CD8-positive, alpha-beta T cell (primary cell): ENCODE measurements at regions of chr1 and their contacts with region 1.

Region 1: GRCh38 chr1:10494754-10495474 is 20.2 kb downstream of the PEX14 start:
- DNase-seq: peak; percentile 66 to 88 (median 81)
- ATAC-seq: peak; percentile 76
- H3K4me3 ChIP-seq: peak overlapping the region; percentile 50 to 59
- H3K4me3 Mint-ChIP-seq: peak overlapping the region; percentile 83
- H3K27ac ChIP-seq: peak overlapping the region; percentile 72 to 80
- H3K27ac Mint-ChIP-seq: peak overlapping the region; percentile 98
- H3K4me1 ChIP-seq: peaks cover 21% of the 10 kb centered on the region
- H3K4me1 Mint-ChIP-seq: peaks cover 42% of the 10 kb centered on the region
- H3K27me3 ChIP-seq: no peaks in the 10 kb centered on the region
- H3K27me3 Mint-ChIP-seq: no peaks in the 10 kb centered on the region
- CTCF ChIP-seq: peak; percentile 99

Region 2: DNA sequence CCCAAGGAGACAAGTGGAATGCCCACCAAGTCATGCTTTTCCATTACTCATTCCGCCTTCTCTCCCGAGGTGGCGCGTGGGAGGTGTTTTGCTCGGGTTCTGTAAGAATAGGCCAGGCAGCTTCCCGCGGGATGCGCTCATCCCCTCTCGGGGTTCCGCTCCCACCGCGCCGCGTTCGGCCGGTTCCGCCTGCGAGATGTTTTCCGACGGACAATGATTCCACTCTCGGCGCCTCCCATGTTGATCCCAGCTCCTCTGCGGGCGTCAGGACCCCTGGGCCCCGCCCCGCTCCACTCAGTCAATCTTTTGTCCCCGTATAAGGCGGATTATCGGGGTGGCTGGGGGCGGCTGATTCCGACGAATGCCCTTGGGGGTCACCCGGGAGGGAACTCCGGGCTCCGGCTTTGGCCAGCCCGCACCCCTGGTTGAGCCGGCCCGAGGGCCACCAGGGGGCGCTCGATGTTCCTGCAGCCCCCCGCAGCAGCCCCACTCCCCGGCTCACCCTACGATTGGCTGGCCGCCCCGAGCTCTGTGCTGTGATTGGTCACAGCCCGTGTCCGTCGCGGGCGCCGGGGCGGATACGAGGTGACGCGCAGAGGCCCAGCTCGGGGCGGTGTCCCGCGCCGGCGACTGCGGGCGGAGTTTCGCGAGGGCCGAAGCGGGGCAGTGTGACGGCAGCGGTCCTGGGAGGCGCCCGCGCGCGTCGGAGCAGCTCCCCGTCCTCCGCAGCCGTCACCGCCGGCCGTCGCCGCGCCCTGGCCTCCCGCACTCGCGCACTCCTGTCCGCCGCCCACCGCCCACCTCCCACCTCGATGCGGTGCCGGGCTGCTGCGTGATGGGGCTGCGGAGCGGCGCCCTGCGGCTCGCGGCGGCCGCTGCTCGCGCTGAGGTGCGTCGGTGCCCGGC is 284.8 kb before region 1 on chr1 and contains the start of gene KIF1B:
- CTCF ChIA-PET with region 1: interaction called, 5 read pairs
- POLR2A ChIA-PET with region 1: no interaction called
- intact Hi-C with region 1: loop called in 1 of 2 experiments (anchors 10 kb)
- DNase-seq: peak; percentile 92 to 98 (median 97)
- ATAC-seq: peak; percentile 98
- H3K4me3 ChIP-seq: peak within 1 kb of the TSS; percentile 67 to 82
- H3K4me3 Mint-ChIP-seq: peak within 1 kb of the TSS; percentile 91
- H3K27ac ChIP-seq: peak within 1 kb of the TSS; percentile 54 to 60
- H3K27ac Mint-ChIP-seq: peak within 1 kb of the TSS; percentile 55
- H3K4me1 ChIP-seq: peaks cover 5% of the 10 kb centered on the region
- H3K4me1 Mint-ChIP-seq: peaks cover 25% of the 10 kb centered on the region
- H3K27me3 ChIP-seq: peaks cover 0 to 2% of the 10 kb centered on the region in 2 experiments
- H3K27me3 Mint-ChIP-seq: peaks cover 2% of the 10 kb centered on the region
- CTCF ChIP-seq: peak; percentile 99
- total RNA-seq, gene KIF1B: 6.1 to 7.2 TPM

Region 3: DNA sequence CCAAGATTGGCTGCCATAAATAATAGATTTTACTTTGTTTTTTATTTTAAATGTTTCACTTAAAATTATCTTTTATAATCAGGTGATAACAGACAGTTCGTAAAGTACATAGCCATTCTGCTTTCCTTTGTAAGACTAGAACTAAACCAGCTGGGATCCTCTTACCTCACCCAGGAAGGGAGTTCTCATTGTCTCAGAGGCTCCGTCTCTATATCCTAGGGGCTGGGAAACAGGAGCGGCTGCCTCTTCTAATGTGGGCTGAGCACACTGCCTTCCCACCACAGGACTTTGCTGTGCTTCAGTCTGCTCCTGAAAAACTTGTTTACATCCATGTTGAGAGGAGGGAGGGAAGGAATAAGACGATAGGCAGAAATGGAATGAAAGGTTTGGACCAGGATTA is 141.6 kb before region 1 on chr1:
- CTCF ChIA-PET with region 1: no interaction called
- POLR2A ChIA-PET with region 1: no interaction called
- intact Hi-C with region 1: no loop called
- DNase-seq: no peak
- ATAC-seq: no peak
- H3K4me3 ChIP-seq: no peak overlapping the region
- H3K4me3 Mint-ChIP-seq: no peak overlapping the region
- H3K27ac ChIP-seq: no peak overlapping the region
- H3K27ac Mint-ChIP-seq: no peak overlapping the region
- H3K4me1 ChIP-seq: no peaks in the 10 kb centered on the region
- H3K4me1 Mint-ChIP-seq: no peaks in the 10 kb centered on the region
- H3K27me3 ChIP-seq: no peaks in the 10 kb centered on the region
- H3K27me3 Mint-ChIP-seq: no peaks in the 10 kb centered on the region
- CTCF ChIP-seq: no peak

Region 4: GRCh38 chr1:10472220-10473144 is 22.4 kb before region 1 on chr1 and contains the start of gene DFFA:
- CTCF ChIA-PET with region 1: interaction called, 18 read pairs
- POLR2A ChIA-PET with region 1: interaction called, 5 read pairs
- intact Hi-C with region 1: loop called in 1 of 2 experiments (anchors 2 kb)
- DNase-seq: peak; percentile 83 to 96 (median 91)
- ATAC-seq: peak; percentile 75
- H3K4me3 ChIP-seq: peak within 1 kb of the TSS; percentile 62 to 81
- H3K4me3 Mint-ChIP-seq: peak within 1 kb of the TSS; percentile 92
- H3K27ac ChIP-seq: peak within 1 kb of the TSS; percentile 39 to 66
- H3K27ac Mint-ChIP-seq: peak within 1 kb of the TSS; percentile 90
- H3K4me1 ChIP-seq: peaks cover 34% of the 10 kb centered on the region
- H3K4me1 Mint-ChIP-seq: peaks cover 47% of the 10 kb centered on the region
- H3K27me3 ChIP-seq: no peaks in the 10 kb centered on the region
- H3K27me3 Mint-ChIP-seq: no peaks in the 10 kb centered on the region
- CTCF ChIP-seq: no peak
- total RNA-seq, gene DFFA: 10.0 to 10.4 TPM

Region 5: DNA sequence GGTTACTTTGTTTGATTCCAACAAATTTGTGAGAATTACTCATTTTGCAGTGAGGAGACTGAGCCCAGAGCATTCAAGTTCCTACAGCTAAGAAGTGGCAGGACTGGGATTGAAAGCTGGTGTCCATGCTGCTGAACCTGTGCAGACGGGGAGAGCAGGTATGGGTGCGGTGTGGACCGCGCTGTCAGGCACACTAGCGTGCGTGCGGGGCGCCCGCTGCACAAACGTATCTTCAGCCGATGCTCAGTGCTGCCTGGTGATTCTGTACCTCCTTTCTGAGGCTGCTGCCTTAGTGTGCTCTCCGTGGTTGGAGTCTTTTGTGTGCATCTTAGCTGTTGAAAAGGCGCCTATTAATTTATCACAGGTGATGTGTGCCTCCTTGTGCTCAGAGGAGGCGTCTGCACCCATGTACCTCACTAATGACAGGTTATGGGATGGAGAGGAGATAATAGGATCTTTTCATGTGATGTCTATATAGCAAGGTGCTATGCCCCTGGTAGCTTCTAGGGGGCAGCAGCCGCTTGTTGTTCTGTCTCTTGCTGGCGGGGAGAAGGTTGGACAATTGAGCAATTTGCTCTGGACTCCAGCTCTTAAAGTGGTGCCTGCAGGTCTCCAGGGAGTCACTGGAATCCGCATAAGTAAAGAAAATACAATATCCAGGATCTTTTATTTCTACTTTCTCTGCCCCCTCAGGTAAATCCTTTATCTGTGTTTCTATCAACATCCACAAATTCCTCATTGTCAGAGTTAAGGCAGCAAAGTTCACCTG is 12.4 kb after region 1 on chr1:
- CTCF ChIA-PET with region 1: interaction called, 135 read pairs
- POLR2A ChIA-PET with region 1: interaction called, 7 read pairs
- intact Hi-C with region 1: loop called (anchors 1 to 2 kb)
- DNase-seq: peak; percentile 22 to 76 (median 57)
- ATAC-seq: peak; percentile 59
- H3K4me3 ChIP-seq: no peak overlapping the region
- H3K4me3 Mint-ChIP-seq: no peak overlapping the region
- H3K27ac ChIP-seq: no peak overlapping the region
- H3K27ac Mint-ChIP-seq: peak overlapping the region; percentile 39
- H3K4me1 ChIP-seq: peaks cover 35% of the 10 kb centered on the region
- H3K4me1 Mint-ChIP-seq: peaks cover 44% of the 10 kb centered on the region
- H3K27me3 ChIP-seq: no peaks in the 10 kb centered on the region
- H3K27me3 Mint-ChIP-seq: no peaks in the 10 kb centered on the region
- CTCF ChIP-seq: peak; percentile 81

Region 6: GRCh38 chr1:10635085-10635896 is 140.4 kb after region 1 on chr1:
- CTCF ChIA-PET with region 1: interaction called, 3 read pairs
- POLR2A ChIA-PET with region 1: no interaction called
- intact Hi-C with region 1: loop called in 1 of 2 experiments (anchors 5 kb)
- DNase-seq: no peak
- ATAC-seq: no peak
- H3K4me3 ChIP-seq: no peak overlapping the region
- H3K4me3 Mint-ChIP-seq: no peak overlapping the region
- H3K27ac ChIP-seq: no peak overlapping the region
- H3K27ac Mint-ChIP-seq: no peak overlapping the region
- H3K4me1 ChIP-seq: peaks cover 6% of the 10 kb centered on the region
- H3K4me1 Mint-ChIP-seq: peaks cover 4% of the 10 kb centered on the region
- H3K27me3 ChIP-seq: no peaks in the 10 kb centered on the region
- H3K27me3 Mint-ChIP-seq: no peaks in the 10 kb centered on the region
- CTCF ChIP-seq: no peak

Region 7: GRCh38 chr1:10841118-10841517 is 346.2 kb after region 1 on chr1:
- CTCF ChIA-PET with region 1: no interaction called
- POLR2A ChIA-PET with region 1: no interaction called
- intact Hi-C with region 1: no loop called
- DNase-seq: no peak
- ATAC-seq: no peak
- H3K4me3 ChIP-seq: no peak overlapping the region
- H3K4me3 Mint-ChIP-seq: no peak overlapping the region
- H3K27ac ChIP-seq: no peak overlapping the region
- H3K27ac Mint-ChIP-seq: no peak overlapping the region
- H3K4me1 ChIP-seq: no peaks in the 10 kb centered on the region
- H3K4me1 Mint-ChIP-seq: peaks cover 2% of the 10 kb centered on the region
- H3K27me3 ChIP-seq: peaks cover 0 to 3% of the 10 kb centered on the region in 2 experiments
- H3K27me3 Mint-ChIP-seq: peaks cover 21% of the 10 kb centered on the region
- CTCF ChIP-seq: no peak

Region 8: GRCh38 chr1:10904396-10905358 is 409.8 kb after region 1 on chr1:
- CTCF ChIA-PET with region 1: interaction called, 16 read pairs
- POLR2A ChIA-PET with region 1: no interaction called
- intact Hi-C with region 1: no loop called
- DNase-seq: peak in 8 of 9 experiments; percentile 33 to 80 (median 49)
- ATAC-seq: peak; percentile 78
- H3K4me3 ChIP-seq: peak overlapping the region in 1 of 2 experiments; percentile 13
- H3K4me3 Mint-ChIP-seq: peak overlapping the region; percentile 65
- H3K27ac ChIP-seq: peak overlapping the region in 1 of 2 experiments; percentile 53
- H3K27ac Mint-ChIP-seq: peak overlapping the region; percentile 88
- H3K4me1 ChIP-seq: peaks cover 46% of the 10 kb centered on the region
- H3K4me1 Mint-ChIP-seq: peaks cover 32% of the 10 kb centered on the region
- H3K27me3 ChIP-seq: no peaks in the 10 kb centered on the region
- H3K27me3 Mint-ChIP-seq: no peaks in the 10 kb centered on the region
- CTCF ChIP-seq: no peak